Aorta (tissue), 5 donors: ENCODE measurements at regions of chr3 and their contacts with region 1.

Region 1: GRCh38 chr3:86937305-86937791 is 53.6 kb downstream of the VGLL3 start:
- DNase-seq: peak in 1 of 2 donors; percentile 64
- ATAC-seq: peak; percentile 68
- H3K4me3 ChIP-seq: no peak overlapping the region
- H3K27ac ChIP-seq: peak overlapping the region; percentile 57 to 83
- H3K4me1 ChIP-seq: peaks cover 0 to 5% of the 10 kb centered on the region in 2 donors
- H3K27me3 ChIP-seq: no peaks in the 10 kb centered on the region

Region 2: GRCh38 chr3:86982883-86983282 is 45.5 kb after region 1 on chr3:
- intact Hi-C with region 1: loop called (anchors 5 kb)
- DNase-seq: no peak
- ATAC-seq: peak; percentile 60
- H3K4me3 ChIP-seq: no peak overlapping the region
- H3K27ac ChIP-seq: peak overlapping the region in 1 of 2 donors; percentile 51
- H3K4me1 ChIP-seq: peaks cover 1 to 12% of the 10 kb centered on the region in 2 donors
- H3K27me3 ChIP-seq: no peaks in the 10 kb centered on the region

Region 3: DNA sequence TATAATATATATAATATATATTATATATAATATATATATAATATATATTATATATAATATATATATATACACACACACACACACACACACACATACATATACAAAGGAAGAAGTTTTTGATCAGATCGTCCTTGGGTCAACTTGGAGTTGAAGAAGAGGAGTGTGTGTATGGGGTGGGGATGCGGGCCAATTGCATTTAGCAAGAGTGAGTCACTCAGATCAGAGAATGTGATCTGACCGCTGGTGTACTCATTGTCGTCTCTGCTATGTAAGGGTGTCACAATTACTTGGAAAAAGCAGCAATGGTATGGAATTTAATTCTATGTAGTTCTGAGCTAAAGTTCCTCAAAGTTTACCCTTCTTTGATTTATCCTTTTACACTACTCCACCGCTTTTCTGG is 58.2 kb after region 1 on chr3:
- intact Hi-C with region 1: no loop called
- DNase-seq: no peak
- ATAC-seq: no peak
- H3K4me3 ChIP-seq: no peak overlapping the region
- H3K27ac ChIP-seq: no peak overlapping the region
- H3K4me1 ChIP-seq: no peaks in the 10 kb centered on the region
- H3K27me3 ChIP-seq: no peaks in the 10 kb centered on the region